Vagina (tissue), 2 donors: ENCODE measurements at regions of chr11 and their contacts with region 1.

Region 1: DNA sequence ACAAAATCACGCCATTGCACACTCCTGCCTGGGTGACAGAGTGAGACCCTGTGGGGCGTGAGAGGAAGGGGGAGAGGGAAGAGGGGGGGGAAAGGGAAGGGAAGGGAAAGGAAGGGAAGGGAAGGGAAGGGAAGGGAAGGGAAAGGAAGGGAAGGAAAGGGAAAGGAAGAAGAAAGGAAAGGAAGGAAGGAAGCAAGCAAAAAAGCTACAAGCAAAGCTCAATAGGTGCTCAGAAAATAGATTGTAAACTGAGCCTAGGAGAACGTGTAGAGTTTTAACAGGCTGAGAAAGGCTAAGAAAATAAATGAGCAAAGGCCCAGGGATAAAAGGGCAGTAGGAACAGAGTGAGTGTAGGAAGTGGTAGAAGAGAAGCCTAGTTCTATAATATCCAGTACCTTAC is 30.8 kb upstream of the GDPD4 start:
- DNase-seq: no peak
- H3K4me3 ChIP-seq: no peak overlapping the region
- H3K27ac ChIP-seq: no peak overlapping the region
- H3K4me1 ChIP-seq: no peaks in the 10 kb centered on the region
- H3K27me3 ChIP-seq: no peaks in the 10 kb centered on the region
- CTCF ChIP-seq: no peak
- POLR2A ChIP-seq: no peak

Region 2: DNA sequence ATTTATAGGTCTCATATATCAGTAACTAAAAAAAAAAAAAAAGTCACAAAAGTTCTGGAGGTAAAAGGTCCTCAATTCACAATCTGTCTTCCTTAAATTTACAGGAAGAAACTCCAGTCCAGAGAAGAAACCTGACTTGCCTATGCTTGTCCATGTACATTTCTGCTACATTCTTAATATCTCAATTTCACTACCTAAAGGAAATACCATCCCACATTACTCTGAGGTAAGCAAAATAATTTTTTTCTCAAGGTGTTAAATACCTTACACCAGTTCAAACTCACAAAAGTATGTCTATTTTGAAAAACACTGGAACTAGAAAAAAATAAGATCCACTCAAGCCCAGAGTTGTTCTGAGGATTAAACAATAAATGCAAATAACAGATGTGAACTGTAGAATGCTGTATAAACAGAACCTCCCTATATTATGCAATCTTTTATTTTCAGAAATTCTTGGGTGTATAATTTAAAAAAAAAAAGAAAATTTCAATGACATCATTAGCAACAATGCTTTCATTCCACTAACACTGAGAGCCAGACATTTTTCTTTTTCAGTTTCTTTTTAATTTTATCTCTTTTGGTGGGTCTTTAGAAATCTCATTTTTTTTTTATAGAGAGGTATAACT is 19.1 kb after region 1 on chr11:
- intact Hi-C with region 1: loop called (anchors 2 kb)
- DNase-seq: no peak
- H3K4me3 ChIP-seq: no peak overlapping the region
- H3K27ac ChIP-seq: no peak overlapping the region
- H3K4me1 ChIP-seq: peaks cover 18% of the 10 kb centered on the region
- H3K27me3 ChIP-seq: no peaks in the 10 kb centered on the region
- CTCF ChIP-seq: no peak
- POLR2A ChIP-seq: no peak